Activated B cell treated with CpG ODN at 0.5 μM for 24 hours (primary cell): ENCODE measurements at regions of chr17 and their contacts with region 1.

Region 1: DNA sequence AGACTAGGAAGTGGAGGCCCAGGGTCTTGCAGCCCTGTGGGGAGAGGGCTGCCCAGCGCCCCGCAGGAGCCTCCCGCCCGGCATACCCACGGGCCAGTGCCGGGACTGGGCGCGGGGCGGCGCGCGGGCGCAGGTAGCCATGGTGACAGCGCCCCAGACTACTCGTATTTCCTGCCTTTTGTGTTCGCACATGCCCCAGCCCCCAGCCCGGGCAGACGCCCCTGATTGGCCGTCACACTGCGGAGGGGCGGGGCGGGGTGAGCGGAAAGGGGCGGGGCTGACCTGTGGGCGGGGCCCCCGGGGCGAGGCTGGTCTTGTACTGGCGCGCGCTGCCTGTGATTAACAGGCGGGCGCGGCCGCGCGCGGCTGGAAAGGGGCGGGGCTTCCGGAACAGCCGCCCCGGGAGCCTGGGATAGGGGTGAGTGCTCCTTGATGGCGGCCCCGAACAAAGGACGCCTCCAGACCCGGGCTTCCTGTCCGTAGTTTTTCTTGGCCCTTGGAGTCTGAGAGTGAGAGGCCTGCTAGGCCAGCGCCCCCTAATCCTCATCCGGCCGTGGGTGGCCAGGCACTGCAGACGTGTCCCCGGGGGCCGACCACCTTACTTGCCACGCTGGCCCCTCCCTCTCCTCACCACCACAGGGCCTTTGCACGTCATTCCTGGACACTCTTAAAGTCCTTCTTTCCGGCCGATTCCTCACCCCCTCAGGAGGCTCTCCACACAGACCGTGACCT is 71.0 kb downstream of the RAI1 start:
- DNase-seq: peak; percentile 93
- ATAC-seq: peak; percentile 85
- H3K4me3 Mint-ChIP-seq: peak overlapping the region; percentile 86
- H3K27ac Mint-ChIP-seq: peak overlapping the region; percentile 98
- H3K4me1 Mint-ChIP-seq: peaks cover 88% of the 10 kb centered on the region
- H3K27me3 Mint-ChIP-seq: no peaks in the 10 kb centered on the region
- CTCF ChIP-seq: no peak

Region 2: GRCh38 chr17:16987830-16988601 is 764.2 kb before region 1 on chr17:
- CTCF ChIA-PET with region 1: no interaction called
- POLR2A ChIA-PET with region 1: interaction called, 3 read pairs
- intact Hi-C with region 1: loop called (anchors 10 kb)
- DNase-seq: peak; percentile 78
- ATAC-seq: peak; percentile 80
- H3K4me3 Mint-ChIP-seq: peak overlapping the region; percentile 84
- H3K27ac Mint-ChIP-seq: peak overlapping the region; percentile 97
- H3K4me1 Mint-ChIP-seq: peaks cover 78% of the 10 kb centered on the region
- H3K27me3 Mint-ChIP-seq: no peaks in the 10 kb centered on the region
- CTCF ChIP-seq: no peak

Region 3: DNA sequence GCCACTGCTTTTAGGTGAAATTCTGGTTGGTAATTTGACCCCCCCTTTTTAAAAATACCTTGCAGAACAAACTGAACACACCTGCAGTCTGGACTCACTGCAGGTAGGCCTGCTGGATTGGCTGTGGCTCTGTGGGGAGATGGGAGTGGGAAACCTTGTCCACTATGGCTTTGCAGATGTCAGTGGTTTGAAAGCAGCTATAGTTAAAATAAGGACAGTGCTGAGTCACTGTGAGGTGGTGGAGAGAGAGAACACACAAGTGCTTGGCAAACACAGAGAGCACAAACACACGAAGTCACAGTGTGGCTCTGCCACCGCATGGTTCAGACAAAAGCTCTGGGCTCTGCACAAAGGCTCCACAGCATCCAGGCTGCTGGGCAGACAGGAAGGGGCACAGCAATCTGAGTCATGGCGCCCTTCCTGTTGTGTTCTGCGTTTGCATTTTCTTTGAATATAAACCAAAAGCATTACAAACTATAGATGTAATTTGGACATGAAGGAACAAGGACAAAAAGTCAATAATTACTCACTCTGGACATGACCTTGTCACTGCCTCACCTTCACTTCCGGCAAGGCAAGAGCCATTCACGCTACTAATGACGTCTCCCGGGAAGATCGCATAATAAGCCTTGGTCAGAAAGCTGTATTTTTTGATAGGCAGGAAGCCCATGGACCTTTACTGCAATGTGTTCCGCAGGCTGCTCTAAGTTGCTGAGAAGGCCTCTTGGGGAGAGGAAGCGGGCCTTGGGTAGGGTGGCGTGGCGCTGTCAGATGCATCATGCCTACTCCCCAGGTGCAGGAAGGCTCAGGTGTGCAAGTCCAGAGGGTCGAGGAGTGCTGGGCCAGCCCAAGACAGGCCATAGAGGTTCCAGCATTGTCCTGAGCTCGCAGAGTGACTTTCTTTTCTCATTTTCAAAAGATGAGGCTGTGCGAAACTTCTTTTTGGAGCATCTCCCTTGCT is 335.6 kb before region 1 on chr17:
- CTCF ChIA-PET with region 1: no interaction called
- POLR2A ChIA-PET with region 1: no interaction called
- intact Hi-C with region 1: no loop called
- DNase-seq: no peak
- ATAC-seq: no peak
- H3K4me3 Mint-ChIP-seq: no peak overlapping the region
- H3K27ac Mint-ChIP-seq: no peak overlapping the region
- H3K4me1 Mint-ChIP-seq: peaks cover 10% of the 10 kb centered on the region
- H3K27me3 Mint-ChIP-seq: peaks cover 12% of the 10 kb centered on the region
- CTCF ChIP-seq: no peak

Region 4: DNA sequence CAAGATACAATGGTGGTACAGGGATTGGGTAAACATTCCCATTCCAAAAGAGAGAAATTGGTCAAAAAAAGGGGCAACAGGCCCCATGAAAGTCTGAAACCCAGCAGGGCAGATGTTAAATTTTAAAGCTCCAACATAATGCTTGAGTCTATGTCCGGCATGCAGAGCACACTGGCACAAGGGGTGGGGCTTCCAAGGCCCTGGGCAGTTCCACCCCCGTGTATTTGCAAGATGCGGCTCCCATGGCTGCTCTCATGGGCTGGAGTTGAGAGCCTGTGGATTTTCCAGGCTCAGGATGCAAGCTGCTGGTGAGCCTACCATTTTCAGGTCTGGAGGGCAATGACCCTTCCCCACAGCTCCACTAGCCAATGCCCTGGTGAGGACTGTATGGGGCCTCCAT is 98.9 kb before region 1 on chr17:
- CTCF ChIA-PET with region 1: no interaction called
- POLR2A ChIA-PET with region 1: no interaction called
- intact Hi-C with region 1: no loop called
- DNase-seq: no peak
- ATAC-seq: no peak
- H3K4me3 Mint-ChIP-seq: no peak overlapping the region
- H3K27ac Mint-ChIP-seq: no peak overlapping the region
- H3K4me1 Mint-ChIP-seq: no peaks in the 10 kb centered on the region
- H3K27me3 Mint-ChIP-seq: peaks cover 4% of the 10 kb centered on the region
- CTCF ChIP-seq: no peak

Region 5: GRCh38 chr17:17694169-17695081 is 57.8 kb before region 1 on chr17:
- CTCF ChIA-PET with region 1: interaction called, 3 read pairs
- POLR2A ChIA-PET with region 1: interaction called, 27 read pairs
- intact Hi-C with region 1: loop called (anchors 1 kb)
- DNase-seq: peak; percentile 81
- ATAC-seq: peak; percentile 70
- H3K4me3 Mint-ChIP-seq: peak overlapping the region; percentile 86
- H3K27ac Mint-ChIP-seq: peak overlapping the region; percentile 96
- H3K4me1 Mint-ChIP-seq: peaks cover 54% of the 10 kb centered on the region
- H3K27me3 Mint-ChIP-seq: no peaks in the 10 kb centered on the region
- CTCF ChIP-seq: no peak

Region 6: GRCh38 chr17:17783116-17783824 is 31.0 kb after region 1 on chr17:
- CTCF ChIA-PET with region 1: no interaction called
- POLR2A ChIA-PET with region 1: interaction called, 3 read pairs
- intact Hi-C with region 1: loop called (anchors 1 kb)
- DNase-seq: peak; percentile 32
- ATAC-seq: peak; percentile 32
- H3K4me3 Mint-ChIP-seq: peak overlapping the region; percentile 88
- H3K27ac Mint-ChIP-seq: no peak overlapping the region
- H3K4me1 Mint-ChIP-seq: peaks cover 27% of the 10 kb centered on the region
- H3K27me3 Mint-ChIP-seq: peaks cover 2% of the 10 kb centered on the region
- CTCF ChIP-seq: no peak

Region 7: DNA sequence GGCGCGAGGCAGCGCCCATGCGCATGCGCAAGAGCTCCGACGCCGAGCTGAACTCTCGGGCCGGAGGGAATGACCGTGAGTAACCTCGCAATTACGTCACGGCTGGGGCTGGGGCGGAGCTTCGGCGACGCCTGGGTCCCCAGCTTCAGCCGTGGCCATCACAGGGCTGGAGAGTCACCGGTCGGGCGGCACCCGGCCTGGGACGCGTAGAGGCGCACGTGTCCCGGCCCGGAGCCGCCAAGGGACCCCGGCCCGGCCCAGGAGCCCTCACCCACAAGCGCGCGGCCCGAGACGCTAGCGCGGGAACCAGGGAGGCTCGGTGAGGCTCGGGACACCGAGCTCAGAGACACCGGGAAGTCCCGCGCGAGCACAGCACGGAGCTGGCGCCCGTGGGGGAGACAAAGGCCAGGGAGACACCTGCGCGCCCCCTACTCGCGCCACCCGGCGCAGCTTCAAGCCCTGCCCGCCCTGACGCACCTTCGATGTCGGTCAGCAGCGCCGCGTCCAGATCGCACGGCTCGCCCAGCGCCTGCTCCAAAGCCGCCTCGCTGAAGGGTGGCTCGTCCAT is 84.1 kb after region 1 on chr17:
- CTCF ChIA-PET with region 1: no interaction called
- POLR2A ChIA-PET with region 1: interaction called, 6 read pairs
- intact Hi-C with region 1: loop called (anchors 1 kb)
- DNase-seq: peak; percentile 93
- ATAC-seq: peak; percentile 59
- H3K4me3 Mint-ChIP-seq: peak overlapping the region; percentile 86
- H3K27ac Mint-ChIP-seq: peak overlapping the region; percentile 66
- H3K4me1 Mint-ChIP-seq: peaks cover 70% of the 10 kb centered on the region
- H3K27me3 Mint-ChIP-seq: no peaks in the 10 kb centered on the region
- CTCF ChIP-seq: no peak

Region 8: GRCh38 chr17:17940451-17940911 is 188.2 kb after region 1 on chr17:
- CTCF ChIA-PET with region 1: no interaction called
- POLR2A ChIA-PET with region 1: no interaction called
- intact Hi-C with region 1: no loop called
- DNase-seq: no peak
- ATAC-seq: no peak
- H3K4me3 Mint-ChIP-seq: no peak overlapping the region
- H3K27ac Mint-ChIP-seq: no peak overlapping the region
- H3K4me1 Mint-ChIP-seq: peaks cover 14% of the 10 kb centered on the region
- H3K27me3 Mint-ChIP-seq: no peaks in the 10 kb centered on the region
- CTCF ChIP-seq: no peak

Region 9: DNA sequence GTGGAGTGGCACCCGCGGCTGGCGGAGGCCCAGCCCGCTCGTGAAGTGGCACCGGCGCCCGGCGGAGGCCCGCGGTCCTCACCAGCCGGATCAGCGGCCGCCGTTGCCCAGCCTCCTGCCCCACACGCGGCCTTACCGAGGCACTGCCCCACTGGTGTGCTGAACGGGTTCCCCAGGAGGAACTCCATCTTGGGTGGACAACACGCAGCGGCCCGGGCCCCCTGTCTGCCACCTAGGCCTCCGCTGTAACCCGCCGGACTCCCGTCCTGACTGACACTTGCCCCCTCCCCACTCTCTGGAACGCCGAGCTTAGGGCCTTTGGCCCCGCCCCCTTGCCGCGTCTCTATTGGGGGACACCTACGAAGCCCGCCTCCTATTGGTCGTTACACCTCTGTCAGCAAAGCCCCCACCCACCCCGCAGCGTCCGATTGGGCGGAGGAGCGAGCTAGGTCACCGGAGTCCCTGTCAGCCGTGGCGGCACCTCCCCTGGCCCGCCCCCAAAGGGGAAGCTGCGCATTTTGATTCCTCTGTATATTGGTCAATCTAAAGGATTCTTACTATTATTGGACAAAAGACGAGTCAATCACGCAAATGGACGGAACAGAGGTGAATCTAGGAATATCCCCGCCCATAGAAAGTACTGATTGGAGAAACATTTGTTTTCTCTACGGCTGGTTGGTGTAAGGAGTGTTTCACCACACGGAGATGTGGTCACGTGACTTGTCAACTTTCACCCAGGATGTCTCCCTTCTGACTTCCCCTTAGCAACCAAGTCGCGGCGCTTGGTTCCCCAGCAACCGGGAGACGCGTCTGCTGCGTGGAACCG is 220.1 kb after region 1 on chr17 and contains the starts of genes DRC3 and TOM1L2:
- CTCF ChIA-PET with region 1: no interaction called
- POLR2A ChIA-PET with region 1: interaction called, 5 read pairs
- intact Hi-C with region 1: loop called (anchors 1 kb)
- DNase-seq: peak; percentile 97
- ATAC-seq: peak; percentile 91
- H3K4me3 Mint-ChIP-seq: peak within 1 kb of the TSS; percentile 94
- H3K27ac Mint-ChIP-seq: peak within 1 kb of the TSS; percentile 87
- H3K4me1 Mint-ChIP-seq: peaks cover 22% of the 10 kb centered on the region
- H3K27me3 Mint-ChIP-seq: no peaks in the 10 kb centered on the region
- CTCF ChIP-seq: no peak
- total RNA-seq, gene DRC3: not detected in 2 replicates
- total RNA-seq, gene TOM1L2: 15.2 and 18.3 TPM in 2 replicates